Psoas muscle (tissue), 8 donors: ENCODE measurements at regions of chr13 and their contacts with region 1.

Region 1: DNA sequence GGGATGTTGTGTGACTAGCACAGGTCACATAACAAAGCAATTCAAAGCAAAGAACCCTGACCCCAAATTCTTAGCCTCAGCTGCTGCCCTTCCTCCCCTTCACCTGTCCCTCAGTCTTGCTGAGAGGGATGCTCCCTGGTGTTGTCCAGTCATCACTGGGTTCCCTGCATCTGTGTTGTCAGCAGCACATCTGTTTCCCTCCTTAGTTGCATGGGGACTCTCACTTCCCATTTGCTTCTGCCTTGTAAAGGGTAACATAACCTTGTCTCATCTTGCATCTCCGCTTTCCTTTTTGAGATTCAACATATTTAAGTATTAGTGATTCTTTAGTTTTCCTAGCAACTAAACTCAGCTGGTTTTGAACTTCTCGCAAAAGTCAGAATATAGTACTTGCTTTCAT is 54.0 kb downstream of the SPATA13 start:
- DNase-seq: no peak
- ATAC-seq: no peak
- H3K4me3 ChIP-seq: no peak overlapping the region
- H3K27ac ChIP-seq: no peak overlapping the region
- H3K4me1 ChIP-seq: no peaks in the 10 kb centered on the region
- H3K27me3 ChIP-seq: peaks cover 0 to 3% (median 0%) of the 10 kb centered on the region in 3 donors
- CTCF ChIP-seq: no peak

Region 2: DNA sequence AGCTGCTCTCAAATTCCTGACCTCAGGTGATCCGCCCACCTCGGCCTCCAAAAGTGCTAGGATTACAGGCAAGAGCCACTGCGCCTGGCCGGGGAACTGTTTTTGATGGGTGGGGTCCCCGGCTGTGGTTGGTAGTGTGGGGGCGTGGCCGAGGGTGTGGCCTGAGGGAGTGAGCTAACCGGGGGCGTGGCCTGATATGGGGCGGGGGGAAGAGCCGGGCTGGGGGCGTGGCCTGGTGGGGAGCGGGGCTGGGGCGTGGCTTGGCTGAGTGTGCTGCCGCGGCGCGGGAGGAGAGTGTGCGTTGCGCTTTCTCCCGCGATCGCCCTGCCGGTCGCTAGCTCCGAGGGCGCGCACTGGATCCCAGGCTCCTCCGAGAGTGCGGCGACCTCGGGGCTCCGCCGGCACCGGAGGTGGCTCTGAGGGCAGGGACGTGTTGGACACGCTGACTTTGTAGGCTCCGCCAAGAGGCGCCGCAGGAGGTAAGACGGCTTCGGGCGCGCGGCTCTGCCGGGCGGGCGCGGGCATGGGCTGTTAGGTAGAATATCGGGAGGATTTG is 54.0 kb before region 1 on chr13 and contains the start of gene SPATA13:
- intact Hi-C with region 1: loop called in 1 of 2 experiments (anchors 5 kb)
- DNase-seq: peak; percentile 91 to 92
- ATAC-seq: peak; percentile 87 to 98 (median 96)
- H3K4me3 ChIP-seq: peak within 1 kb of the TSS; percentile 81
- H3K27ac ChIP-seq: peak within 1 kb of the TSS; percentile 30
- H3K4me1 ChIP-seq: no peaks in the 10 kb centered on the region
- H3K27me3 ChIP-seq: peaks cover 0 to 35% (median 8%) of the 10 kb centered on the region in 3 donors
- CTCF ChIP-seq: no peak
- total RNA-seq, gene SPATA13: 2.2 to 5.8 (median 4.1) TPM

Region 3: DNA sequence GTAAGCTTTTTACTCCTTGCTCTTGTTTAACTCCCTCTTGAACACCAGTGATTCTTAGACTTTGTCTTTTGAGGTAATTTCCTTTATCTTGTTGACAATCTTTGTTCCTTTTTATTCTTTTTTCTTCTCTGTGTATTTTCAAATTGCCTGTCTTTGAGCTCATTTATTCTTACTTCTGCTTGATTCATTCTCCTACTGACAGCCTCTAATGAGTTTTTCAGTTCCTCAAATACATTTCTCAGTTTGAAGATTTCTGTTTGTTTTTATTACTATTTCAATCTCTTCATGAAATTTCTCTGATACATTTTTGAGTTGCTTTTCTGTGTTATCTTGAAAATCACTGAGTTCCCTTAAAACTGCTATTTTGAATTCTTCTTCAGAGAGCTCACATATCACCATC is 1311.4 kb after region 1 on chr13:
- intact Hi-C with region 1: no loop called
- DNase-seq: no peak
- ATAC-seq: no peak
- H3K4me3 ChIP-seq: no peak overlapping the region
- H3K27ac ChIP-seq: no peak overlapping the region
- H3K4me1 ChIP-seq: no peaks in the 10 kb centered on the region
- H3K27me3 ChIP-seq: no peaks in the 10 kb centered on the region
- CTCF ChIP-seq: no peak